PC-9 (cell line): ENCODE measurements at regions of chr5 and their contacts with region 1.

Region 1: GRCh38 chr5:6495433-6496206 is 47.0 kb downstream of the UBE2QL1 start:
- DNase-seq: no peak
- H3K4me3 ChIP-seq: no peak overlapping the region
- H3K27ac ChIP-seq: no peak overlapping the region
- H3K4me1 ChIP-seq: peaks cover 15% of the 10 kb centered on the region
- H3K27me3 ChIP-seq: peaks cover 99% of the 10 kb centered on the region
- CTCF ChIP-seq: no peak

Region 2: DNA sequence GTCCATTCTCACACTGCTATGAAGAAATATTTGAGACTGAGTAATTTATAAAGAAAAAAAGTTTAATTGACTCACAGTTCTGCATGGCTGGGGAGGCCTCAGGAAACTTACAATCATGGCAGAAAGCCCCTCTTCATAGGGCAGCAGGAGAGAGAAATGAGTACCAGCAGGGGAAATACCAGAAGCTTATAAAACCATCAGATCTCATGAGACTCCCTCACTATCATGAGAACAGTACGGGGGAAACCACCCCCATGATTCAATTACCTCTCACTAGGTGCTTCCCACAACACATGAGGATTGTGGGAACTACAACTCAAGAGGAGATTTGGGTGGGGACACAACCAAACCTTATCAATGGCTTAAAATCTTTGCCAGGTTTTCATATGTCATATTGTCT is 197.3 kb after region 1 on chr5:
- CTCF ChIA-PET with region 1: no interaction called
- POLR2A ChIA-PET with region 1: no interaction called
- intact Hi-C with region 1: no loop called
- DNase-seq: no peak
- H3K4me3 ChIP-seq: no peak overlapping the region
- H3K27ac ChIP-seq: no peak overlapping the region
- H3K4me1 ChIP-seq: no peaks in the 10 kb centered on the region
- H3K27me3 ChIP-seq: peaks cover 12% of the 10 kb centered on the region
- CTCF ChIP-seq: no peak

Region 3: DNA sequence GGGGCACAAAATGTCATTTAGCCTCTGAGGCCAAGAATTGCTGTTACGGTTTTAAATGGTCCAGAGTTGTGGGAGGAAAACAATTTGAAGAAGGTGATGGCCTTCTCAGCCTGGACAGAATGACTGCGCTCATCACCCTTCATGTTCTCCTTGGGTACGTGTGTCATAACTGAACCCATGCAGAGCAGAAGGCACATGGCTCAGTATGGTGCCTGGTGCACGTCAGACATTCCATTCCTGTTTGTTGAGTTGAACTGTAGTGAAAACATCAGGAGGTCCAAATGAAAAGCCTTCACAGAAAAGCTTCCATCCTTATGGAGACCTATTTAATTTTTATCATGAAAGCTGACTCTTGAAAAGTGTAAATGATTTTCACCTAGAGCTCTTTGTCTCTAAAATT is 1222.1 kb after region 1 on chr5:
- CTCF ChIA-PET with region 1: interaction called, 12 read pairs
- POLR2A ChIA-PET with region 1: no interaction called
- intact Hi-C with region 1: no loop called
- DNase-seq: no peak
- H3K4me3 ChIP-seq: no peak overlapping the region
- H3K27ac ChIP-seq: no peak overlapping the region
- H3K4me1 ChIP-seq: no peaks in the 10 kb centered on the region
- H3K27me3 ChIP-seq: peaks cover 13% of the 10 kb centered on the region; the same call in 1 of the 2 replicates
- CTCF ChIP-seq: no peak